ENCODE measurements at regions of chr2 and their contacts with region 1.

Region 1: GRCh38 chr2:54522624-54523281 is 66.6 kb downstream of the SPTBN1 start:
- DNase-seq: peak; percentile 83 to 87
- H3K4me3 ChIP-seq: no peak overlapping the region
- H3K4me3 Mint-ChIP-seq: no peak overlapping the region
- H3K27ac Mint-ChIP-seq: no peak overlapping the region
- H3K4me1 ChIP-seq: peaks cover 20% of the 10 kb centered on the region
- H3K4me1 Mint-ChIP-seq: peaks cover 42% of the 10 kb centered on the region
- H3K27me3 ChIP-seq: no peaks in the 10 kb centered on the region
- H3K27me3 Mint-ChIP-seq: no peaks in the 10 kb centered on the region
- CTCF ChIP-seq: peak; percentile 72 to 83

Region 2: DNA sequence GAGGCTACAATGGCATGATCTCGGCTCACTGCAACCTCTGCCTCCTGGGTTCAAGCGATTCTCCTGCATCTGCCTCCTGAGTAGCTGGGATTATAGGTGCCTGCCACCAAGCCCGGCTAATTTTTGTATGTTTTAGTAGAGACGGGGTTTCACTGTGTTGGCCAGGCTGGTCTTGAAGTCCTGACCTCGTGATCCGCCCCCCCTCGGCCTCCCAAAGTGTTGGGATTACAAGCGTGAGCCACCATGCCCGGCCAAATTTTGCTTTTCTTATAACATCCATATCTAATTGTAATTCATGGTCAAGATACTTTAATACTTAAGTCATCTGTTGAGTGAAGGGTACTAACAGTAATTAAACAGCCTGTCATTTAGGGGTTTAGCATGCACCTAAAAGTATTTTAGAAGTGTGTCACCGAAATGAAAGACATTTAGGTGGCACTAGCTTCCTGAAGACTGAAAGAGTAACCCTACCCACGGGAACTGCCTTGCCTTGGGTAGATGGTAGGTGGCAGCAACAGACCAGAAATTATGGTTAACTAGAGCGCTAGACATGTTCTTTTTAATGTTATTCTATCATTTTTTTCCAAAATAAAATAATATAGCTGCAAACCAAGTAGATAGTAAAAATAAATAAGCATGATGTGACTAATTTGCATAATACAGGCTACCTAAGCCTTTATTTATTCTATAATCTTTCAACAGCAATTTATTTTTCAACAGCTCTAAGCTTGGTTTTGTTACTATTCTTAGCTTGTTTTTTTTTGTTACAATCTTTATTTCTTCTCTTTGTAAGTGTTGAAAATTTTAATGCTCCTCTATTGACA is 415.9 kb before region 1 on chr2:
- CTCF ChIA-PET with region 1: interaction called, 3 read pairs
- POLR2A ChIA-PET with region 1: no interaction called
- intact Hi-C with region 1: loop called (anchors 1 kb)
- DNase-seq: peak in 1 of 2 experiments; percentile 63
- H3K4me3 ChIP-seq: no peak overlapping the region
- H3K4me3 Mint-ChIP-seq: no peak overlapping the region
- H3K27ac Mint-ChIP-seq: no peak overlapping the region
- H3K4me1 ChIP-seq: 0 out of 2 replicates have a peak, but pooled peaks cover 4% of the 10 kb centered on the region
- H3K4me1 Mint-ChIP-seq: no peaks in the 10 kb centered on the region
- H3K27me3 ChIP-seq: no peaks in the 10 kb centered on the region
- H3K27me3 Mint-ChIP-seq: peaks cover 4% of the 10 kb centered on the region
- CTCF ChIP-seq: peak; percentile 69 to 72

Region 3: GRCh38 chr2:54558188-54559005 is 35.6 kb after region 1 on chr2:
- CTCF ChIA-PET with region 1: interaction called, 6 read pairs
- POLR2A ChIA-PET with region 1: no interaction called
- intact Hi-C with region 1: loop called (anchors 1 kb)
- DNase-seq: peak; percentile 80
- H3K4me3 ChIP-seq: peak overlapping the region; percentile 84
- H3K4me3 Mint-ChIP-seq: peak overlapping the region; percentile 87
- H3K27ac Mint-ChIP-seq: peak overlapping the region; percentile 73
- H3K4me1 ChIP-seq: peaks cover 42% of the 10 kb centered on the region
- H3K4me1 Mint-ChIP-seq: peaks cover 52% of the 10 kb centered on the region
- H3K27me3 ChIP-seq: no peaks in the 10 kb centered on the region
- H3K27me3 Mint-ChIP-seq: no peaks in the 10 kb centered on the region
- CTCF ChIP-seq: no peak

Region 4: GRCh38 chr2:54639609-54640008 is 116.9 kb after region 1 on chr2:
- CTCF ChIA-PET with region 1: interaction called, 3 read pairs
- POLR2A ChIA-PET with region 1: no interaction called
- intact Hi-C with region 1: loop called (anchors 5 kb)
- DNase-seq: no peak
- H3K4me3 ChIP-seq: no peak overlapping the region
- H3K4me3 Mint-ChIP-seq: no peak overlapping the region
- H3K27ac Mint-ChIP-seq: peak overlapping the region; percentile 76
- H3K4me1 ChIP-seq: peaks cover 16% of the 10 kb centered on the region
- H3K4me1 Mint-ChIP-seq: peaks cover 47% of the 10 kb centered on the region
- H3K27me3 ChIP-seq: no peaks in the 10 kb centered on the region
- H3K27me3 Mint-ChIP-seq: no peaks in the 10 kb centered on the region
- CTCF ChIP-seq: no peak

Region 5: DNA sequence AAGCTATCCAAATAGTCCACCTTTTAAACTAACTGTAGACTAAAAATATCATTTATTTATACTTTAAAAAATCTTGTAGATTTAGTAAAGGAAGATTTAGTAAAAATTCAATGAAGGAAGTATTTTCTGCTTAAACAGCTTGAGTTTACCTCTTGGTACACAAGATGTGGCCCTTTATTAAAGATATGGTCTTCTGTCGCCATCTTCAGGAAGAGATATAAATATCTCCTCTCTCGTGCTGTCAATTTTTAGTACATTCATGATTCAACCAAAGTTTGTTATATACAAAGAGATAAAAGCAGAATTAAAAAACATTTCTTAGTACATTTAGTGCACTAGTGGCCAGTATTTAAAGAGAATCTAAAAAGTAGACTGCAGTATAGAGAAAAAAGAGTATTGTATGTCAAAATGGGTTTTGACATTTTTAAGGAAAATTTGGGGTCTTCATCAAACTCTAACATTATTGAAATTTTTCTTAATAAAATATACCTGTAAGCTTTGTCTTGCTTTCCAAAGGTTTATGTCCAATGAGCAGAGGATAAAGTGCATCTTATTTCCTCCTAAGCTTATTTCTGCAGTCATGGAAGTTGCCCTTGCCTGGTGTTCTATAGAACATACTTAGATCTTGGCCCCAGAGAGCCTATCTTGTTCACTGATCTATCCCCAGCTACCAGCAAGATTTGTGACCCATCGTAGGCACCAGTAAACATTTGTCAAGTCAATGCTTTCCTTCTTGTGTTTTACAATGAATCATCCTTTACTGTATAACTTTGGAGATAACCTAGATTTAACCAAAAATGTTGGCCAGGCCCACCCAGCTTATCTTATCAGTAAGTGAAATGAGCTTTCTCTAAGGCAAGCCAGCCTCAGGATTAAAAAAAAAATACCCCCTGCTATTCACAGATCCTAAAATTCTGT is 182.2 kb after region 1 on chr2:
- CTCF ChIA-PET with region 1: interaction called, 17 read pairs
- POLR2A ChIA-PET with region 1: no interaction called
- intact Hi-C with region 1: loop called (anchors 1 kb)
- DNase-seq: peak; percentile 55 to 73
- H3K4me3 ChIP-seq: no peak overlapping the region
- H3K4me3 Mint-ChIP-seq: no peak overlapping the region
- H3K27ac Mint-ChIP-seq: no peak overlapping the region
- H3K4me1 ChIP-seq: peaks cover 35% of the 10 kb centered on the region
- H3K4me1 Mint-ChIP-seq: no peaks in the 10 kb centered on the region
- H3K27me3 ChIP-seq: no peaks in the 10 kb centered on the region
- H3K27me3 Mint-ChIP-seq: peaks cover 2% of the 10 kb centered on the region
- CTCF ChIP-seq: peak; percentile 43 to 54

Measured in Caco-2 (cell line).